Activated CD4-positive, alpha-beta memory T cell treated with anti-CD3 and anti-CD28 coated beads, Interleukin-2, amount 10 ng/mL, durations not matched to agents 7 days and 5 days (primary cell): ENCODE measurements at regions of chr2 and their contacts with region 1.

Region 1: DNA sequence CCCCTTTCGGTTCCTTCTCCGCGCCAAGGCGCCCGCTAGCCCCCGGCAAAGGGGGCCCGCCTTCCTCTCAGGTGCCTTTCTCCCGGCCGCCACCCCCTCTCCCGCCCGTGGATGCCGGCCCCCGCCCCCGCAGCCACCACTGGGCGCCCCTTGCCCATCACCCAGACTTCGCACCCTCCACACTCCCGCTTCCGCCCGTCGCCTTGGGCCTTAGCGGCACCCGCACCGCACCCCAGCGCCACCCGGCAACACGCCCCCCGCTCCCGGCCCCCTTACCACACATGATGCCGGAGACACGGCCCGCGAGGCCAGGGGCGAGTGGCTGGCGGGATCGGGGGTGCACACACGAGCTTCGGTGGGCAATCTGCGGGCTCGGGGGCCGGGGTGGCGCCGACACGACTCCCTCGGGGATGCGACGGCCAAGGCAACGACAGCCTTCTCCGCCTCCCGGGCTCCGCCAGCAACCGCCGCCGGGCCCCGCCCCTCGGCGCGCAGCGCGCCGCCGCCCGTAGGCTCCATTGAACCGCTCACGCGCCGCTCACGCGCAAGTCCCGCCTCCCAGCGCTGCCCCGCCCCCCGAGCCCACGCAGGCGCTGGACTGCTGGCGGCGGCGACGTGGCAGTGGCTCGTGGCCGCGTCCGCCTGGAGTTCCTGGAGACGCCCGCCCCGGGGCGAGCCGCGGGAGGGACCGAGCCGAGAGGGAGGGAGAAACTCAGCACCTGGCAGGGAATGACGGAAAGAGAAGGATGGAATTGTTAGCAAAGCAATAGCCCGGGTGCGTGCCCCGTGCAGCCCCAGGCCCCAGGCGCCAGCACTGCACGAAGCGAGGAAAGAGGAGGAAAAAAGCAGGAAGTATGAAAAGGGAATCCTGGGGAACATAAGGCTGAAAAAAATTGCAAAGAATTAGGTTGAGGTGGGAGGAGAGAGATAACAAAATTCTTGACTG is at the start of gene GFPT1:
- DNase-seq: peak; percentile 93
- H3K4me3 Mint-ChIP-seq: peak within 1 kb of the TSS; percentile 80
- H3K27ac Mint-ChIP-seq: peak within 1 kb of the TSS; percentile 69
- H3K4me1 Mint-ChIP-seq: peaks cover 43% of the 10 kb centered on the region
- H3K27me3 Mint-ChIP-seq: no peaks in the 10 kb centered on the region
- total RNA-seq, gene GFPT1: 27.4 to 29.6 TPM

Region 2: DNA sequence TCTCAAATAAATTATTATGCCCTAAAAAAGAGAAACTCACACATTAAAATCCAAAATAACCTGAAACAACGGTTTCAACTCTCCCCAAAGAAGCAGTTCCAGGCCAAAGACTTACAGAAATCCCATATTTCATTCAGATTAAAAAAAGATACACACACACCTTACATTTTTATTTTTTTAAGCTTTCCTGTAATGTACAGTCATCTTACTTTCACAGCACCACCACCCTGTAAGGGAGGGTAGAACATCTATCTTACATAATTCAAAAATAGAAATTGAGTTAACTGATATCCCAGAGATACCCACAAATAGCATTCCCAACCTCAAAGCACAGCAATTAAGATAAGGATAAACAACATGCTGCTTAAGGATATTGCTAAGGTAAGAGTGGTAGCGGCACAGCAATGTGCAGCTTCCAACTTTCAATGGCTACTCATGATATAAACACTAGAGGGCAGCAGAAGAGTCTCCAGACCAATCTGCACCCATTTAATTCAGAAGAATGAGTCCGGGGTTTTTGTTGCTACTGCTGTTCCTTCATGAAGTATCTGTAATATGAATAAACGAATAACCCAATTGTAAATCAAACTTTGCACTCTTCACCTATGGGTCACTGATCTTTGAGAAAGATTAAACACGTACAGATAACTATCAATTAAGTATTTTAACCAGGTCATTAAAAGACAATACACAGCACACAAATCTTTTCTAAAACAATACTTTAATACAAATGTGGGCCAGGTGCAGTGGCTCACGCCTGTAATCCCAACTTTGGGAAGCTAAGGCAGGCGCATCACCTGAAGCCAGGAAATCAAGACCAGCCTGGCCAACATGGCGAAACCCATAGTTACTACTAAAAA is 11.3 kb before region 1 on chr2:
- CTCF ChIA-PET with region 1: interaction called, 29 read pairs
- POLR2A ChIA-PET with region 1: interaction called, 5 read pairs
- DNase-seq: no peak
- H3K4me3 Mint-ChIP-seq: no peak overlapping the region
- H3K27ac Mint-ChIP-seq: no peak overlapping the region
- H3K4me1 Mint-ChIP-seq: peaks cover 13% of the 10 kb centered on the region
- H3K27me3 Mint-ChIP-seq: no peaks in the 10 kb centered on the region